Activated CD8-positive, alpha-beta T cell treated with anti-CD3 and anti-CD28 coated beads for 36 hours (primary cell): ENCODE measurements at regions of chr1 and their contacts with region 1.

Region 1: GRCh38 chr1:40438391-40439015 is 11.8 kb upstream of the ZFP69B start:
- DNase-seq: peak; percentile 37
- ATAC-seq: no peak
- H3K4me3 Mint-ChIP-seq: no peak overlapping the region
- H3K27ac Mint-ChIP-seq: no peak overlapping the region
- H3K4me1 Mint-ChIP-seq: peaks cover 2% of the 10 kb centered on the region
- H3K27me3 Mint-ChIP-seq: no peaks in the 10 kb centered on the region
- CTCF ChIP-seq: peak; percentile 82

Region 2: GRCh38 chr1:40411294-40411693 is 27.2 kb before region 1 on chr1:
- CTCF ChIA-PET with region 1: interaction called, 10 read pairs
- POLR2A ChIA-PET with region 1: no interaction called
- intact Hi-C with region 1: no loop called
- DNase-seq: no peak
- ATAC-seq: no peak
- H3K4me3 Mint-ChIP-seq: no peak overlapping the region
- H3K27ac Mint-ChIP-seq: no peak overlapping the region
- H3K4me1 Mint-ChIP-seq: peaks cover 60% of the 10 kb centered on the region
- H3K27me3 Mint-ChIP-seq: no peaks in the 10 kb centered on the region
- CTCF ChIP-seq: no peak

Region 3: GRCh38 chr1:40425198-40425597 is 13.3 kb before region 1 on chr1:
- CTCF ChIA-PET with region 1: interaction called, 29 read pairs
- POLR2A ChIA-PET with region 1: interaction called, 3 read pairs
- intact Hi-C with region 1: no loop called
- DNase-seq: no peak
- ATAC-seq: no peak
- H3K4me3 Mint-ChIP-seq: no peak overlapping the region
- H3K27ac Mint-ChIP-seq: no peak overlapping the region
- H3K4me1 Mint-ChIP-seq: peaks cover 12% of the 10 kb centered on the region
- H3K27me3 Mint-ChIP-seq: no peaks in the 10 kb centered on the region
- CTCF ChIP-seq: no peak